Activated CD8-positive, alpha-beta T cell treated with anti-CD3 and anti-CD28 coated beads for 36 hours (primary cell): ENCODE measurements at regions of chr12 and their contacts with region 1.

Region 1: DNA sequence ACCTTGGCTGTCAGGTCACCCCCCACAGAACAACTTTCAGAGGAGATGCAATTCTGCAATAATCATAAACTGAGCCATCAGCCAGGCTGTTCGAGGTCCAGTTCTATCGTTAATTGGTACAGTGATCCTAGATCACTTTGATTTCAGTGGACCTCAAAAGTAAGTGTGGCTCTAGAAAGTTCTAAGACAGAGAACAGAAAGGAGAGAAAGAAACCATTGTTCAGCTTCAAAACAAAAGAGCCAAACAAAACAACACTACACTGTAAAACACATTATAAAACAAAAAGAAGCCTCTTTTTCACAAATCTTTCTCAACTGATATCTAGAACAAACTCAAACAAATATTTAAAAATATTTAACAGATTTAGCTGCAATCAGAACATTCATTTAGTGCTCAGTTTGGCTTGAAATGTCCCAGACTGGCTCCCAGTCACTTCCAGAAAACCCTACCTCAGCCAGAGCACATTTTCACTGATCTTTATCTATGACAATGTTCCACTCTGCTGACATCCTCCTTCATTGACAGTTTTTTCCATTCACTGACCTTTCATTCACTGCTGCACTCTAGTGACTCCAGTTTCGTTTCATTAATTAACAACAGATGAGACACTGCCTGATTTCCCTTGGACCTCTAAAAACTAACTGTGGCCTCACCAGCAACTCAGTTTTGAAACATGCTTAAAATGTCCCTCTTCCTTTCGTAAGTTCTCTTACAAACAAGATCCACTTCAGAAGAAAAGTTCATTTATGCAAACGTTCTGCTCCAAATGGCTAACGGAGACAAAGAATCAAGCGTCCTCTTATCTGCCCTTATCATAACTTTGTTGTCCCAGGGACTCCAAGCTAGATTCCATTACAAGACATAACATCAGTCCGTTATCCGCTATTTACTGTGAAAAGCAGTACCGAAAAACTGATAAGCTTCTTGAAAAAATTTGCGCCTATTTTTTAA is 56.8 kb downstream of the DUSP16 start:
- DNase-seq: peak; percentile 54
- ATAC-seq: peak; percentile 88
- H3K4me3 Mint-ChIP-seq: peak overlapping the region; percentile 42
- H3K27ac Mint-ChIP-seq: peak overlapping the region; percentile 96
- H3K4me1 Mint-ChIP-seq: peaks cover 75% of the 10 kb centered on the region
- H3K27me3 Mint-ChIP-seq: no peaks in the 10 kb centered on the region
- CTCF ChIP-seq: no peak

Region 2: DNA sequence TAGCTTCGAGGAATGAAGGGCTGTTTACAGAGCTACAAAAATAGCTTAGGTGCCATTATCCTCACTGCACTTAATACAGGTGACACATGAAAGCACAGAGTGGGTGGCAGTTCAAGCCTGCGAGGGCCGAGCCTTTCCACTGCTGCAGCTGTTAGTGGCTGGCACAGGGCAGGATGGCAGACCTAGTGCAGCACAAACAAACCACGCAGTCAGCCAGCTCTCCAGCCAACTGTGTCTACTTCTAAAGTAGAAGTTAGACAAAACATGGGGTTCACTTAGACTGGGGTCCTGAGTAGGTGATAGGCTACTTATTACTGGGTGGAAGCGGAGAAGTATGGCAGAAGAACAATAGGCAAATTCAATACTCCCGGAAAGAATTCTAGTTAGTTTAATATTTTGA is 38.6 kb before region 1 on chr12:
- CTCF ChIA-PET with region 1: interaction called, 11 read pairs
- POLR2A ChIA-PET with region 1: interaction called, 5 read pairs
- intact Hi-C with region 1: no loop called
- DNase-seq: peak; percentile 68
- ATAC-seq: peak; percentile 73
- H3K4me3 Mint-ChIP-seq: no peak overlapping the region
- H3K27ac Mint-ChIP-seq: peak overlapping the region; percentile 87
- H3K4me1 Mint-ChIP-seq: peaks cover 70% of the 10 kb centered on the region
- H3K27me3 Mint-ChIP-seq: no peaks in the 10 kb centered on the region
- CTCF ChIP-seq: no peak

Region 3: GRCh38 chr12:12474931-12475795 is 30.7 kb before region 1 on chr12:
- CTCF ChIA-PET with region 1: interaction called, 7 read pairs
- POLR2A ChIA-PET with region 1: interaction called, 14 read pairs
- intact Hi-C with region 1: no loop called
- DNase-seq: peak; percentile 76
- ATAC-seq: peak; percentile 88
- H3K4me3 Mint-ChIP-seq: peak overlapping the region; percentile 51
- H3K27ac Mint-ChIP-seq: peak overlapping the region; percentile 99
- H3K4me1 Mint-ChIP-seq: peaks cover 61% of the 10 kb centered on the region
- H3K27me3 Mint-ChIP-seq: no peaks in the 10 kb centered on the region
- CTCF ChIP-seq: no peak

Region 4: DNA sequence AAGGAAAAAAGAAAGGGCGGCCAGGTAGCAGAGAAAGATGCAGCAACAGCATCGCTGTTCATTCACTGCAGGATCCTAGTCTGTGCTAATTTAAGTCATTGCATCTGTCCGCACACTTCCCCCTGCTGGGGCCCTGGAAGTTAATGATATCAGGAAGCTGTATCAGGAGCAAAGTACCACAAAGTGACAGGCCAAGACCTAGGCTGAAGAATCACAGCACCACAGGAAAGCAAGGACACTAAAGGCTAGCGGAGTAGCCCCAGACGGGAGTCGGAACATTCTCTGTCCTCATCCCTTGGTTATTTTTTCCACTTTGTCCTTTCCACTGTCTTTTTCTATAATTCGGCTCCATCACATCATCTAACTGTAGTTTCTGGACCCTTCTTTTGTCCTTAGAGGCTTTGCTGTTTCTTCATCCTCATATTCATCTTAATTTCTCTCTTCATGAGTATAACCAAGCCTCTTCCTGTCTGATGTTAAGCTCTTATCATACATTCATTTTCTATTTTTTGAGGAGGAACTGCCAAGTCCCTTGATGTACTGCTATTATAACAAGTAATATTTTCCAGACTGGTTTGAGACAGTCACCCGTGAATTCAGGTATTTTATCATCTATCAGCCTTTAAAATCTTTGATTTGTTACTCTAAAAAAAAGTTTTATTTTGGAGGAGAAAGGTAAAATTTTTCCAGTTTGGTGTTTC is 28.5 kb after region 1 on chr12:
- CTCF ChIA-PET with region 1: no interaction called
- POLR2A ChIA-PET with region 1: no interaction called
- intact Hi-C with region 1: no loop called
- DNase-seq: no peak
- ATAC-seq: peak; percentile 72
- H3K4me3 Mint-ChIP-seq: no peak overlapping the region
- H3K27ac Mint-ChIP-seq: peak overlapping the region; percentile 80
- H3K4me1 Mint-ChIP-seq: peaks cover 45% of the 10 kb centered on the region
- H3K27me3 Mint-ChIP-seq: no peaks in the 10 kb centered on the region
- CTCF ChIP-seq: no peak

Region 5: GRCh38 chr12:12562585-12563261 is 56.9 kb after region 1 on chr12 and contains the start of gene DUSP16:
- CTCF ChIA-PET with region 1: interaction called, 3 read pairs
- POLR2A ChIA-PET with region 1: interaction called, 7 read pairs
- intact Hi-C with region 1: loop called (anchors 5 kb)
- DNase-seq: peak; percentile 82
- ATAC-seq: peak; percentile 78
- H3K4me3 Mint-ChIP-seq: peak within 1 kb of the TSS; percentile 89
- H3K27ac Mint-ChIP-seq: peak within 1 kb of the TSS; percentile 91
- H3K4me1 Mint-ChIP-seq: peaks cover 33% of the 10 kb centered on the region
- H3K27me3 Mint-ChIP-seq: no peaks in the 10 kb centered on the region
- CTCF ChIP-seq: no peak
- total RNA-seq, gene DUSP16: 28.2 to 30.2 TPM